Activated CD4-positive, alpha-beta T cell treated with anti-CD3 and anti-CD28 coated beads, Interleukin-2, amount 10 ng/mL, durations not matched to agents 24 days and 14 days (primary cell): ENCODE measurements at regions of chr3 and their contacts with region 1.

Region 1: DNA sequence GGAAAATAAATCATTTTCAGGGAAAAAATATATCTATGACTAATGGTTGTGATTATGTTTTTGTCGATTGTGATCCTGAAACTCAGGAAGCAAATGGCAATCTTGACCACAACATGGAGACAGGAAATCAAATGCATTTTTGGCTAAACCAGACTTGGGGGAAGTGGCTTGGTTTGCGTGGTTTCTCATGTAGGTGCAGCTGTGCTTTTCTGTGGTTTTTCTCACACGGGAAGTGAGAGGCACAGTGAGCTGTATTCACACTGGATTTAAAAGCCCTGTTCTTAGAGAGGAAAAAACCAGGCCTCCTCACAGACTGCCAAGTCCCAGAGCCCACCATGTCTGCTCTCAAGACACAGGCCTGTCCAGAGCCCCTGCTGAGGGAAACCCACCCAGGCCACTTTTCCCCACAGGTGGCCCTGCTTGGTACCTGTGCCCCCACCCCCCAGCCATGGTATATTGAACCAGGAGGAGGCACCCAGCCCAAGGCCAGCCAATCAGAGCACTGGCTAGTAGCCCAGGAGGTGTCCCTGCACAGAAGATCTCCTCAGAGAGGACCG is 46.1 kb downstream of the BTD start:
- DNase-seq: peak; percentile 92
- H3K4me3 Mint-ChIP-seq: peak overlapping the region; percentile 69
- H3K27ac Mint-ChIP-seq: peak overlapping the region; percentile 38
- H3K4me1 Mint-ChIP-seq: peaks cover 38% of the 10 kb centered on the region
- H3K27me3 Mint-ChIP-seq: peaks cover 21% of the 10 kb centered on the region

Region 2: DNA sequence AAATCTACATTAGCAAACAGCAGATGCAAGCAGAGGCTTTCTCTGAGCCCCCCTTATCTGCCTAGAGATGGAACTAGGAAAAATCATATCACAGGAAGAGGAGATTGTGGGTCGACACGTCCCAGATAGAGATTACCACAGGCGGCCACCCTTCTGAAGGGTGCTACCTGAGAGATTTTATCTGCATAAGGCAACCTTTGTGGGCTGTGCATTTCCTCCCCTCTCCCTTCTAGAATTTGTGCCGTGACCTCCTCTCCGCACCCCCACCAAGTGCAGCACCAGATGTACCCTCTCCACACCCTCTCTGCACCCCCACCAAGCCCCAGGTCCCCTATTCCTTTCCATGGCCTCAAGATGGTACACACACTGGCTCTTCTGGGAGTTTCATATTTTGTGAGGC is 247.7 kb before region 1 on chr3:
- intact Hi-C with region 1: no loop called
- DNase-seq: peak; percentile 61
- H3K4me3 Mint-ChIP-seq: peak overlapping the region; percentile 42
- H3K27ac Mint-ChIP-seq: peak overlapping the region; percentile 40
- H3K4me1 Mint-ChIP-seq: peaks cover 23% of the 10 kb centered on the region
- H3K27me3 Mint-ChIP-seq: peaks cover 5% of the 10 kb centered on the region

Region 3: DNA sequence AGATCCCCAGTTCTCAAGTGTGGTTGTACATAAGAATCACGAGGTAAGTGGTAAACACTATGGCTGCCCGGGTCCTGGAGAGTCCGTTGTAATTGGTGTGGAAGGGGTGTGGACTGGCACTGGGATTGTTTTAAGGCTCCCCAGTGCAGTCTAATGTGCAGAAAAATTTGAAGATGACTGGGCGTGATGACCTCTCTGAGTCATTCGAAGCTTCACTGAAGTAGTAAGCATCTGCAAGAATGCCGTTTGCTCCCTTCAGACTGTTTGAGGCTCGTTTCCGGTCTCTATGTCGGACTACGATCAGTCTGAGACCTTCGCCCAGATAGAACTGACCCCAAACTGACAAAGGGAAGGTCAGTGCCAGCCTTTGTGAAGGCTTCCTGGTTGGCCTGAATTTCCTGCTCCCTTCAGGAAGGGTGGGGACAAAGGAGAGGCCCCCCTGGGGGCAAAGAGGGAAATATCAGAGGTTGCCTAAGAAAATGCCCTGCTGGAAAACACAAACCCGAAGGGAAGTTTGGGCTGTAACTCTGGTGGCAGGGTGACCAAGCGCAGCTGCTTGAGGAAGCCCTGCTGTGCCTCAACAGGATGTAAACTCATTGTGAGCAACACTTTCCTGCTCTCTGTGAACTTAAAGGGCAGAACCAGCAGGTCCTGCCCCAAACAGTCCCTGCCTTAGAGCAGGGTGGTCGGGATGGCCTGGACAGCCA is 11.5 kb before region 1 on chr3:
- intact Hi-C with region 1: loop called (anchors 1 kb)
- DNase-seq: peak; percentile 78
- H3K4me3 Mint-ChIP-seq: peak overlapping the region; percentile 68
- H3K27ac Mint-ChIP-seq: peak overlapping the region; percentile 94
- H3K4me1 Mint-ChIP-seq: peaks cover 40% of the 10 kb centered on the region
- H3K27me3 Mint-ChIP-seq: no peaks in the 10 kb centered on the region

Region 4: DNA sequence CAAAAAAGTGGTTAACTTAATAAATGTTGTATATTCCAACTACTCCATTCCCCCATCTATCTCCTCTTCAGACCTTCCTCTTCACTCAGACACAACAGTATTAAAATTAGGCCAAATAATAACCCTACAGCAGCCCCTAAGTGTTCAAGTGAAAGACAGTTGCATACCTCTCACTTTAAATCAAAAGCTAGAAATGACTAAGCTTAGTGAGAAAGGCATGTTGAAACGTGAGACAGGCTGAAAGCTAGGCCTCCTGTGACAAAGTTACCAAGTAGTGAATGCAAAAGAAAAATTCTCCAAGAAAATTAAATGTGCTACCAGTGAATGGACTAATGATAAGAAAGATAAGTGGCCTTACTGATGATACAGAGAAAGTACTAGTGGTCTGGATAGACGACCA is 78.4 kb after region 1 on chr3:
- intact Hi-C with region 1: loop called (anchors 5 kb)
- DNase-seq: no peak
- H3K4me3 Mint-ChIP-seq: no peak overlapping the region
- H3K27ac Mint-ChIP-seq: no peak overlapping the region
- H3K4me1 Mint-ChIP-seq: peaks cover 17% of the 10 kb centered on the region
- H3K27me3 Mint-ChIP-seq: no peaks in the 10 kb centered on the region